ENCODE measurements at regions of chr1 and their contacts with region 1.

Region 1: GRCh38 chr1:201941420-201942128 is 4.8 kb downstream of the LMOD1 start:
- DNase-seq: no peak

Region 2: GRCh38 chr1:201895913-201896807 is 45.4 kb before region 1 on chr1:
- intact Hi-C with region 1: loop called in 1 of 2 experiments (anchors 5 kb)
- DNase-seq: peak; percentile 97

Region 3: GRCh38 chr1:201964261-201964660 is 22.7 kb after region 1 on chr1:
- intact Hi-C with region 1: no loop called
- DNase-seq: no peak

Measured in posterior vena cava (tissue), 2 donors.